Heart left ventricle (tissue), 16 donors: ENCODE measurements at regions of chr1 and their contacts with region 1.

Region 1: DNA sequence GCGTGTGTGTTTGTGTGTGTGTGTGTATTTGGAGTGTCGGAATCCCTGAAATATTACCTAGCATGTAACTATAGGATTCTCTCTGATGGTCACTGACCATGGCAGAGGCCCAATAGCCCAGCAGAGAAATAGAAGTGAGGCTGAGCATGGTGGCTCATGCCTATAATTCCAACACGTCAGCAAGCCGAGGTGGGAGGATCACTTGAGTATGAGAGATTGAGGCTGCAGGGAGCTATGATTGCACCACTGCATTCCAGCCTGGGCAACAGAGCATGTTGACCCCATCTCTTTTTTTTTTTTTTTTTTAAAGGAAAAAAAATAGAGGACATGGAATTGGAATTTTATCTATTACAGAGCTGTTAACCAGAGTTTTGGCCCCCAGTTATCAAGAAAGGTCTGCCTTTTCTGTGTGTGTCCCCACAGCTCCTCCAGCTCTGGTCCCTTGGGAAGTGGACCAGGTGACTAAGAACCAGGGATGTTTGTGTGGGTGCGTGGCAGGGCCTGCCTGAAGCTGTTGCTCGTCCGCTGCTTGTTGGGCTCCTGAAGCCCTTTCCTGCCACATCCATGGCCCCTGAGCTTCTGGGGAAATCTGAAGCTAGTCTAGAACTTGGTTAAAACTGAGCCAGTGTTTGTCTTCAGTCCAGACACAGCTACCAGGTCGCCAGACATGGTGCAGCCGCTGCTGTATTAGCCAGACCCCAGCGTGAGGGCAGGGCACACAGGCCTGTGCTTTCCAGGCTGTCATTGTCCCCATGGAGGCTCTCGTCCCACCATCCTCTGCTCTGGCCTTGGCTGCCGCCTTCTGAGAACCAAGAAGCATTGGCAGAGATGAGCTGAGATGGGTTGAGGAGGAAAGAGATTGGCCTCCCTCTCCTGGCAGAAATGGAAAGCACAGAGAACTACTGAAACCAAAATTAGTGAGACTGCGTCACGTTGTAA is 25.5 kb downstream of the CAPN9 start:
- DNase-seq: peak; percentile 58 to 76 (median 66)
- ATAC-seq: peak; percentile 83 to 90 (median 86)
- H3K4me3 ChIP-seq: peak overlapping the region in 2 of 12 donors; percentile 21 to 30
- H3K27ac ChIP-seq: peak overlapping the region in 7 of 12 donors; percentile 2 to 63 (median 33)
- H3K4me1 ChIP-seq: peaks cover 0 to 27% (median 4%) of the 10 kb centered on the region in 12 donors
- H3K27me3 ChIP-seq: no peaks in the 10 kb centered on the region
- CTCF ChIP-seq: peak; percentile 45 to 83 (median 64)
- POLR2A ChIP-seq: no peak

Region 2: GRCh38 chr1:230632273-230632873 is 140.4 kb before region 1 on chr1:
- intact Hi-C with region 1: loop called in 3 of 10 experiments (anchors 5 to 10 kb)
- DNase-seq: no peak
- ATAC-seq: peak in 3 of 4 donors; percentile 59 to 64 (median 63)
- H3K4me3 ChIP-seq: no peak overlapping the region
- H3K27ac ChIP-seq: no peak overlapping the region
- H3K4me1 ChIP-seq: no peaks in the 10 kb centered on the region
- H3K27me3 ChIP-seq: no peaks in the 10 kb centered on the region
- CTCF ChIP-seq: peak in 11 of 12 donors; percentile 20 to 56 (median 37)
- POLR2A ChIP-seq: no peak

Region 3: DNA sequence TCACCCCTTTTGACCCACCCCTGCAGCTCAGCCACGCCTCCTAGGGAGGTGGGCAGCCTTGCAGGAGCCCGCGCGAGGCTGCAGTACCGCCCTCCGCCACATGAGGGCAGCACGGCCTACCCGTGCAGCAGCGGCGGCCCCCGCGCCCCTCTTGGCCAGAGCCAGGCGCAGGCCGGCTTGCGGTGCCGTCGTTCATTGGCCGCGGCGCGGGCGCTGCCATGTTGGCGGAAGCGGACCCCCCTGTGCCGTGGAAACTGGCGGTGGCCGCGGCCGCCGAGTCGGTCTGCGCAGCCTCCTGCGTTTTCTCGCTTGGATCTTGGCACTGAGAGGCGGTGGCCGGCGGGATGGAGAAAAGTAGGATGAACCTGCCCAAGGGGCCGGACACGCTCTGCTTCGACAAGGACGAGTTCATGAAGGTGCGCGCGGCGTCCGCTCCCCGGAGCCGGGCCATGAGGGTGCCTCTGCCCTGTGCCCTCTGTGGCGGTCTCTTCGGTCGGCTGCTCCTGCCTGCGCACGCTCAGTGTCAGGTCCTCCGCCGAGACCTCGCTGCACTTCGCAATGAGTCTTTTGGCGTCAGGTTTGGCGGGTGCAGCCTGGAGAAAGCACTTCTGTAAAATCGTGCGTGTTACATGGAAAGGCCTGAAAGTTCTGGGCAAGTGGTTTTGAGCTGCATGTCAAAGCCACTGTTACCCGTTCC is 130.3 kb before region 1 on chr1 and contains the start of gene COG2:
- intact Hi-C with region 1: loop called in 9 of 10 experiments (anchors 1 to 10 kb)
- DNase-seq: peak; percentile 92 to 97 (median 96)
- ATAC-seq: peak; percentile 95 to 99 (median 98)
- H3K4me3 ChIP-seq: peak within 1 kb of the TSS; percentile 66 to 97 (median 92)
- H3K27ac ChIP-seq: peak within 1 kb of the TSS; percentile 65 to 92 (median 86)
- H3K4me1 ChIP-seq: peaks cover 10 to 47% (median 28%) of the 10 kb centered on the region in 12 donors
- H3K27me3 ChIP-seq: no peaks in the 10 kb centered on the region
- CTCF ChIP-seq: peak in 11 of 12 donors; percentile 99 to 100 (median 100)
- POLR2A ChIP-seq: peak in 1 of 2 donors; percentile 75
- total RNA-seq, gene COG2: 22.8 to 31.4 (median 25.3) TPM

Region 4: GRCh38 chr1:230681599-230681998 is 91.1 kb before region 1 on chr1:
- intact Hi-C with region 1: loop called in 2 of 10 experiments (anchors 5 kb)
- DNase-seq: no peak
- ATAC-seq: peak in 2 of 4 donors; percentile 73 to 78
- H3K4me3 ChIP-seq: no peak overlapping the region
- H3K27ac ChIP-seq: peak overlapping the region in 1 of 12 donors; percentile 0
- H3K4me1 ChIP-seq: peaks cover 0 to 23% (median 12%) of the 10 kb centered on the region in 12 donors
- H3K27me3 ChIP-seq: no peaks in the 10 kb centered on the region
- CTCF ChIP-seq: no peak
- POLR2A ChIP-seq: no peak

Region 5: GRCh38 chr1:230713915-230714764 is 58.6 kb before region 1 on chr1 and contains the start of gene AGT:
- intact Hi-C with region 1: loop called in 2 of 10 experiments (anchors 5 kb)
- DNase-seq: peak; percentile 84 to 92 (median 87)
- ATAC-seq: peak; percentile 95 to 98 (median 97)
- H3K4me3 ChIP-seq: peak within 1 kb of the TSS; percentile 18 to 76 (median 52)
- H3K27ac ChIP-seq: peak within 1 kb of the TSS; percentile 54 to 93 (median 82)
- H3K4me1 ChIP-seq: peaks cover 0 to 49% (median 17%) of the 10 kb centered on the region in 12 donors
- H3K27me3 ChIP-seq: no peaks in the 10 kb centered on the region
- CTCF ChIP-seq: no peak
- POLR2A ChIP-seq: no peak
- total RNA-seq, gene AGT: 37.1 to 182 (median 69.8) TPM

Region 6: DNA sequence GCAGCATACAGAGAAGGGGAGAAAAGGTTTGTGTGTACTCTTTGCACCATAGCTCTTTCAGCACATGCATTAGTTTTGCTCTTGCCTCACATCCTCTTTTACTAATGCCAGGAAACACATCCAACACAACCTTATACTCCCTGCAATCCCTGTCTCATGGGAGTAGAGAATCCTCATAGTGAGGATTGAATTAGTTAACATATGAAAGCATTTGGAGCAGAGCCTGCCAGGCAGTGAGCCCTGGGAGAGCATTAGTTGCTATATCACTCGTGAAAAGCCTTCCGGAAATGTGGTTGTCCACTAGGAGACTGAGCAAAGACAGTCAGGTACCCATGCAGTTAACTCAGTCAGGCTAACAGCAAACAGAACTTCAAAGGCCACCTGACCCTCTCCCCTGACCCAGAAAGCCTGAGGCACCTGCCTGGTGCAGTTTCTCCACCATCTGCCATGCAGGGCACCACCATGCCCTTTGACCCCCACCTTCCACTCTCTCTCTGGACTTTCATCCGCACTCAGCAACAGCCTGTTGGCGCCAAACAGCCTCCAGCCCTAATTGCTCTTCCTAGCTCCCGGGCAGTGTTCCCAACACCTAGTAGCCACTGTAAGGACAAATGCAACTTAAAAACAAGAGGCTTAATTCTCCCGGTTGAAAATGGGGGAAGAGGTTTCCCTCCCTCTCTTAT is 43.9 kb before region 1 on chr1:
- intact Hi-C with region 1: loop called in 1 of 10 experiments (anchors 5 kb)
- DNase-seq: peak in 2 of 5 donors; percentile 44 to 51
- ATAC-seq: peak; percentile 19 to 55 (median 39)
- H3K4me3 ChIP-seq: no peak overlapping the region
- H3K27ac ChIP-seq: peak overlapping the region in 9 of 12 donors; percentile 6 to 69 (median 48)
- H3K4me1 ChIP-seq: peaks cover 0 to 54% (median 20%) of the 10 kb centered on the region in 12 donors
- H3K27me3 ChIP-seq: no peaks in the 10 kb centered on the region
- CTCF ChIP-seq: no peak
- POLR2A ChIP-seq: no peak